Panc1 (cell line): ENCODE measurements at regions of chr2 and their contacts with region 1.

Region 1: DNA sequence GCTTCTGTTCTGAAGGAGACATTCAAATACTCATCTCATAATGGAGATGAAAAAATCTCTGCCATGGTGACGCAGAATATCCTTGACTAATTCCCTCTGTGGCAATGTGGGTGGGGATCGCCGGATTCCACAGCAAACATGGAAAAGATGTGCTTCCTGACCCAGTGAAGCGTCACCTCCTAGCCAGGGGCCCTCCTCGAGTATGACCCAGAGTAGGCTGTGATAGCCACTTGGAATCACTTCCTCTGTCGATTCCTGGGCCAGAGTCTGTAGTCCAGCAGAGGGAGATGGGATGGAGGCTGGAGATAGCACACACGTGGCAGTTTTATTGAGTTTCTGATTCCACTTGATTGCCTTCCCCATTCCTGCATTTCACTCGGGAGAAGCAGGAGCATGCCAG is 36.8 kb downstream of the DRC1 start:
- DNase-seq: no peak
- ATAC-seq: no peak
- H3K4me3 ChIP-seq: no peak overlapping the region
- H3K27ac ChIP-seq: no peak overlapping the region
- H3K4me1 ChIP-seq: no peaks in the 10 kb centered on the region; the same call in 1 of the 2 replicates
- H3K27me3 ChIP-seq: no peaks in the 10 kb centered on the region
- CTCF ChIP-seq: no peak

Region 2: GRCh38 chr2:25624635-25625034 is 813.9 kb before region 1 on chr2:
- CTCF ChIA-PET with region 1: interaction called, 11 read pairs
- POLR2A ChIA-PET with region 1: no interaction called
- in situ Hi-C with region 1: no loop called
- intact Hi-C with region 1: no loop called
- DNase-seq: no peak
- ATAC-seq: no peak
- H3K4me3 ChIP-seq: no peak overlapping the region
- H3K27ac ChIP-seq: no peak overlapping the region
- H3K4me1 ChIP-seq: 0 out of 2 replicates have a peak, but pooled peaks cover 5% of the 10 kb centered on the region
- H3K27me3 ChIP-seq: no peaks in the 10 kb centered on the region
- CTCF ChIP-seq: no peak

Region 3: DNA sequence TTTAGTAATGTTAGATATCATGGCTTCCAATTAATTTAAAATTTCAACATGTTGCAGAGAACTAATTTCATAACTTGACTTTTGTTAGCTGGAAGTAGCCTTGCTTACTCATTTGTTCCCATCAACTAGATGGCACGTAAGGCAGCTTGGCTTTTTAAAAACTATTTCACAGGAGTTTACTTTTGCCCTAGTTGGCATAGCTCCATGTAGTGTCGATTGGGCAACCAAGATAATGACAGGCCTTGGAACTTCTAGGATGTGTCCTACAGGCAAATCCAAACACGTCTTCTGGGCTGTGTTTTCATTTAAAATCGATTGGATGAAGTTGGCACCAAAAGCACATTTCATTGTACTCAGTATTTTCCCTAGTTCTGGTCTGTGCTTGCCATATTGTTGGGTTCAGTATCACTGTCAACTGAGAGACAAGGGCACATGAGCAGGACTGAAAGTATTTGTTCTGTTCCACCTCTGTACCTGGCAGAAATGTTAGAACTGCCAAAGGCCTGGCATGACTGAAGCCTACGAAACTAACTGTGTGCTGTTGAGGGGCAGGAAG is 164.4 kb before region 1 on chr2:
- CTCF ChIA-PET with region 1: no interaction called
- POLR2A ChIA-PET with region 1: no interaction called
- in situ Hi-C with region 1: no loop called
- intact Hi-C with region 1: no loop called
- DNase-seq: no peak
- ATAC-seq: no peak
- H3K4me3 ChIP-seq: no peak overlapping the region
- H3K27ac ChIP-seq: no peak overlapping the region
- H3K4me1 ChIP-seq: no peaks in the 10 kb centered on the region
- H3K27me3 ChIP-seq: no peaks in the 10 kb centered on the region
- CTCF ChIP-seq: no peak

Region 4: GRCh38 chr2:26401739-26402541 is 36.6 kb before region 1 on chr2 and contains the start of gene DRC1:
- CTCF ChIA-PET with region 1: no interaction called
- POLR2A ChIA-PET with region 1: no interaction called
- in situ Hi-C with region 1: no loop called
- intact Hi-C with region 1: no loop called
- DNase-seq: no peak
- ATAC-seq: peak; percentile 90
- H3K4me3 ChIP-seq: peak within 1 kb of the TSS; percentile 29 to 44
- H3K27ac ChIP-seq: no peak within 1 kb of the TSS
- H3K4me1 ChIP-seq: no peaks in the 10 kb centered on the region
- H3K27me3 ChIP-seq: no peaks in the 10 kb centered on the region
- CTCF ChIP-seq: no peak
- total RNA-seq, gene DRC1: 0.18 TPM

Region 5: GRCh38 chr2:26727641-26728561 is 289.4 kb after region 1 on chr2:
- CTCF ChIA-PET with region 1: no interaction called
- POLR2A ChIA-PET with region 1: no interaction called
- in situ Hi-C with region 1: no loop called
- intact Hi-C with region 1: no loop called
- DNase-seq: no peak
- ATAC-seq: no peak
- H3K4me3 ChIP-seq: no peak overlapping the region
- H3K27ac ChIP-seq: no peak overlapping the region
- H3K4me1 ChIP-seq: peaks cover 48% of the 10 kb centered on the region
- H3K27me3 ChIP-seq: no peaks in the 10 kb centered on the region
- CTCF ChIP-seq: no peak

Region 6: GRCh38 chr2:27400348-27401135 is 962.0 kb after region 1 on chr2:
- CTCF ChIA-PET with region 1: no interaction called
- POLR2A ChIA-PET with region 1: no interaction called
- in situ Hi-C with region 1: no loop called
- intact Hi-C with region 1: no loop called
- DNase-seq: no peak
- ATAC-seq: 0 out of 2 replicates have a peak, but pooled peaks have one; percentile 8
- H3K4me3 ChIP-seq: no peak overlapping the region
- H3K27ac ChIP-seq: no peak overlapping the region
- H3K4me1 ChIP-seq: no peaks in the 10 kb centered on the region
- H3K27me3 ChIP-seq: no peaks in the 10 kb centered on the region
- CTCF ChIP-seq: no peak